ENCODE measurements at regions of chr1 and their contacts with region 1.

Region 1: GRCh38 chr1:26321315-26322041 is 3.7 kb downstream of the CD52 start:
- DNase-seq: peak; percentile 88
- H3K4me3 Mint-ChIP-seq: no peak overlapping the region
- H3K27ac Mint-ChIP-seq: peak overlapping the region; percentile 3
- H3K4me1 Mint-ChIP-seq: peaks cover 8% of the 10 kb centered on the region
- H3K27me3 Mint-ChIP-seq: no peaks in the 10 kb centered on the region
- CTCF ChIP-seq: peak; percentile 89

Region 2: GRCh38 chr1:26035959-26036755 is 285.3 kb before region 1 on chr1:
- CTCF ChIA-PET with region 1: interaction called, 3 read pairs
- POLR2A ChIA-PET with region 1: no interaction called
- intact Hi-C with region 1: loop called (anchors 5 kb)
- DNase-seq: peak; percentile 70
- H3K4me3 Mint-ChIP-seq: peak overlapping the region; percentile 94
- H3K27ac Mint-ChIP-seq: peak overlapping the region; percentile 61
- H3K4me1 Mint-ChIP-seq: peaks cover 11% of the 10 kb centered on the region
- H3K27me3 Mint-ChIP-seq: no peaks in the 10 kb centered on the region
- CTCF ChIP-seq: peak; percentile 96

Region 3: GRCh38 chr1:26221094-26221493 is 100.4 kb before region 1 on chr1:
- CTCF ChIA-PET with region 1: no interaction called
- POLR2A ChIA-PET with region 1: no interaction called
- intact Hi-C with region 1: no loop called
- DNase-seq: no peak
- H3K4me3 Mint-ChIP-seq: no peak overlapping the region
- H3K27ac Mint-ChIP-seq: no peak overlapping the region
- H3K4me1 Mint-ChIP-seq: no peaks in the 10 kb centered on the region
- H3K27me3 Mint-ChIP-seq: peaks cover 9% of the 10 kb centered on the region
- CTCF ChIP-seq: no peak

Region 4: DNA sequence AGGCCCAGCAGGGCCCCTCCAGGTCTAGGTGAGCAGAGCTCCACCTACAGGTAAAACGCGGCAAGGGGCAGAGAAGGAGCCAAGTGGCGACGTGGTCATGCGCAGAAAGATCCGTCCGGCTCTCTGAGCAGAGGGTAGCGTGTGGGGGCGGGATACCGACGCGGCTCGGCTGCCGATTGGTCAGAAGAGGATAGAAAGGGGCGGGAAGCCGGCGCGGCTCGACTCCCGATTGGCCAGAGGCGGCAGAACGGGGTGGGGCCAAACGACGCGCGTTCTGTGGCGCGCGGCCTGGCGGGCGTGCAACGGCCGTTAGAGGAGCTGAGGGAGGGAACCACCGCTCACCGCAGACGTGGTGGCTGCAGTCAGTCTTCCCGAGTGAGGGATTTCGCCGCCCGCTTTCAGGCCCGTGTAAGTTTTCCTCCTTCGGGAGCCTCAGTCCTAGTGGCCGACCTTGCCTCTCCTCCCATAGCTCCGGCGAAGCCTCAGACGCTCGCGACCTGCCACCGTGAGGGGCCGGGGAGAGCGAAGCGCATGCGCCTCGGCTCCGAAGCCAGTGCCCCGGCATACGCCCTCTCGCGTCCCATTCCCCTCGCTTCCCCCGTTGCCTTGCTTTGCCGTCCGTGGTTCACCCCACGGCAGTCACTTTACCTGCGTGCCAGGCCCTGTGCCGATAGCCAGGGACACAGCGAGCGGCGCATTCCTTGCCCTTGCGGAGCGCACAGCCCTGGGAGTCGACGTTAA is 87.4 kb before region 1 on chr1 and contains the start of gene CEP85:
- CTCF ChIA-PET with region 1: interaction called, 6 read pairs
- POLR2A ChIA-PET with region 1: no interaction called
- intact Hi-C with region 1: loop called (anchors 2 kb)
- DNase-seq: peak; percentile 97
- H3K4me3 Mint-ChIP-seq: peak within 1 kb of the TSS; percentile 96
- H3K27ac Mint-ChIP-seq: peak within 1 kb of the TSS; percentile 85
- H3K4me1 Mint-ChIP-seq: peaks cover 30% of the 10 kb centered on the region
- H3K27me3 Mint-ChIP-seq: no peaks in the 10 kb centered on the region
- CTCF ChIP-seq: peak; percentile 80
- total RNA-seq, gene CEP85: 11.1 and 12.2 TPM in 2 replicates

Region 5: GRCh38 chr1:26306290-26307229 is 14.9 kb before region 1 on chr1 and contains the start of gene UBXN11:
- CTCF ChIA-PET with region 1: interaction called, 12 read pairs
- POLR2A ChIA-PET with region 1: interaction called, 4 read pairs
- intact Hi-C with region 1: no loop called
- DNase-seq: peak; percentile 98
- H3K4me3 Mint-ChIP-seq: peak within 1 kb of the TSS; percentile 92
- H3K27ac Mint-ChIP-seq: peak within 1 kb of the TSS; percentile 97
- H3K4me1 Mint-ChIP-seq: peaks cover 11% of the 10 kb centered on the region
- H3K27me3 Mint-ChIP-seq: no peaks in the 10 kb centered on the region
- CTCF ChIP-seq: no peak
- total RNA-seq, gene UBXN11: 17.7 and 20.3 TPM in 2 replicates

Region 6: GRCh38 chr1:26391450-26391849 is 70.0 kb after region 1 on chr1:
- CTCF ChIA-PET with region 1: interaction called, 5 read pairs
- POLR2A ChIA-PET with region 1: no interaction called
- intact Hi-C with region 1: loop called (anchors 1 kb)
- DNase-seq: peak; percentile 78
- H3K4me3 Mint-ChIP-seq: no peak overlapping the region
- H3K27ac Mint-ChIP-seq: no peak overlapping the region
- H3K4me1 Mint-ChIP-seq: peaks cover 14% of the 10 kb centered on the region
- H3K27me3 Mint-ChIP-seq: no peaks in the 10 kb centered on the region
- CTCF ChIP-seq: peak; percentile 91

Region 7: GRCh38 chr1:26459573-26460031 is 138.1 kb after region 1 on chr1:
- CTCF ChIA-PET with region 1: no interaction called
- POLR2A ChIA-PET with region 1: no interaction called
- intact Hi-C with region 1: no loop called
- DNase-seq: no peak
- H3K4me3 Mint-ChIP-seq: no peak overlapping the region
- H3K27ac Mint-ChIP-seq: no peak overlapping the region
- H3K4me1 Mint-ChIP-seq: no peaks in the 10 kb centered on the region
- H3K27me3 Mint-ChIP-seq: no peaks in the 10 kb centered on the region
- CTCF ChIP-seq: no peak